CD14-positive monocyte (primary cell): ENCODE measurements at regions of chr13 and their contacts with region 1.

Region 1: DNA sequence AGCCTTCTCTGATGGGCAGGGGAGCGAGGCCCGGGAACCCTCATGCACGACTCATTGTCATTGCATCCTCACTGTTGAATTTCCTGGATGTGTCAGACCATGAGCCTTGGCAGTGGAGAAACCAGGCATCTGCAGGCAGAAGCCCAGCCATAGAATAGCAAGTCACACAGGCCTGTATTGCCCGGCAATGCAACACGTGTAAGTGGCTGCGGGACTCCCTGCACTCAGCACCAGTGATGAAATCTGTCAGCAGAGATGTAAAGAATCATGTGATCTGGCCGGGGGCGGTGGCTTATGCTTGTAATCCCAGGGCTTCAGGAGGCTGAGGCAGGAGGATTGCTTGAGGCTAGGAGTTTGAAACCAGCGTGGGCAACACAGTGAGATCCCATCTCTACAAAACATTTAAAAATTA is 199.8 kb downstream of the KATNAL1 start:
- DNase-seq: peak; percentile 84 to 97 (median 87)
- H3K4me3 ChIP-seq: peak overlapping the region in 1 of 3 experiments; percentile 37
- H3K4me3 Mint-ChIP-seq: peak overlapping the region in 1 of 2 donors; percentile 79
- H3K27ac ChIP-seq: peak overlapping the region; percentile 74 to 89
- H3K27ac Mint-ChIP-seq: peak overlapping the region; percentile 91 to 99 (median 97)
- H3K4me1 ChIP-seq: peaks cover 31 to 40% of the 10 kb centered on the region in 2 donors
- H3K4me1 Mint-ChIP-seq: peaks cover 40% of the 10 kb centered on the region
- H3K27me3 ChIP-seq: no peaks in the 10 kb centered on the region
- H3K27me3 Mint-ChIP-seq: peaks cover 0 to 5% (median 2%) of the 10 kb centered on the region in 3 donors
- CTCF ChIP-seq: no peak

Region 2: DNA sequence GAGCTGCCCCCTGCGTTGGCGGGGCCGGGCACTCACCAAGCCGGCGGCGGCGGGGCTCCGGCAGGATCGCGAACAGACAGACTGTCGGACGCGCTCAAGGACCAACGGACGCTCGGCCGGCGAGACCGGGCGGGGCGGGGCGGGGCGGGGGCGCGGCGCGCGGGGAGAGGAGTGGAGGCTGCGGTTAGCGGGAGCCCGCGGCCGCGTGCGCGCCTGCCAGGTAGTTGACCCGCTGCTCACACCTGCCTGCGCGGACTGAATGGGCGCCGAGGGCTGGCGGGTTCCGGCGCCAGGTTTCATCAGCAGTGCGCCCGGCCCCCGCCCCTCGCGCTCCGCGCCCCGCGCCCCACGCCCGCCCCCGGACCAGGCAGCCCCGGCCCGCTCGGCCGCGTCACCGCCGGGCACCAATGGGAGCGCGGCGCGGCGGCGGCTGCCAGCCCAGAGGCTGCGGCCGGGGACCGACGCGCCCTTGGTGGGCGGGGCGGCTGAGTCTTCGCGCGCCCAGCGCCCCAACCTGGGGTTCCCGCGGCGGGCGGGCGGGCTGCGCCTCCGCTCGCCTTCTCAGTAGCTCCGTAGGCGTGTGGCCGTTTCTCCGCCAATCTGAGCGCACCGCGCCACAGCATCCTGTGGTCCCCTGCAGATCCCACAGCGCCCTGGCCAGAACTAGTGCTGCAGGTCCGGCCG is 512.1 kb before region 1 on chr13 and contains the start of gene SLC7A1:
- intact Hi-C with region 1: loop called in 1 of 2 experiments (anchors 10 kb)
- DNase-seq: peak; percentile 80 to 86 (median 82)
- H3K4me3 ChIP-seq: peak within 1 kb of the TSS; percentile 47 to 79 (median 77)
- H3K4me3 Mint-ChIP-seq: peak within 1 kb of the TSS; percentile 87 to 89
- H3K27ac ChIP-seq: peak within 1 kb of the TSS; percentile 38 to 95
- H3K27ac Mint-ChIP-seq: peak within 1 kb of the TSS; percentile 81 to 89 (median 87)
- H3K4me1 ChIP-seq: peaks cover 12 to 21% of the 10 kb centered on the region in 2 donors
- H3K4me1 Mint-ChIP-seq: peaks cover 25% of the 10 kb centered on the region
- H3K27me3 ChIP-seq: peaks cover 2 to 12% of the 10 kb centered on the region in 2 donors
- H3K27me3 Mint-ChIP-seq: peaks cover 10 to 17% (median 15%) of the 10 kb centered on the region in 3 donors
- CTCF ChIP-seq: no peak
- polyA plus RNA-seq, gene SLC7A1: 0.89 to 2.2 (median 0.92) TPM

Region 3: GRCh38 chr13:29810145-29810742 is 297.3 kb before region 1 on chr13:
- intact Hi-C with region 1: no loop called
- DNase-seq: no peak
- H3K4me3 ChIP-seq: no peak overlapping the region
- H3K4me3 Mint-ChIP-seq: no peak overlapping the region
- H3K27ac ChIP-seq: no peak overlapping the region
- H3K27ac Mint-ChIP-seq: no peak overlapping the region
- H3K4me1 ChIP-seq: no peaks in the 10 kb centered on the region
- H3K4me1 Mint-ChIP-seq: peaks cover 5% of the 10 kb centered on the region
- H3K27me3 ChIP-seq: no peaks in the 10 kb centered on the region
- H3K27me3 Mint-ChIP-seq: peaks cover 0 to 2% (median 0%) of the 10 kb centered on the region in 3 donors
- CTCF ChIP-seq: no peak